ENCODE measurements at regions of chr9 and their contacts with region 1.

Region 1: DNA sequence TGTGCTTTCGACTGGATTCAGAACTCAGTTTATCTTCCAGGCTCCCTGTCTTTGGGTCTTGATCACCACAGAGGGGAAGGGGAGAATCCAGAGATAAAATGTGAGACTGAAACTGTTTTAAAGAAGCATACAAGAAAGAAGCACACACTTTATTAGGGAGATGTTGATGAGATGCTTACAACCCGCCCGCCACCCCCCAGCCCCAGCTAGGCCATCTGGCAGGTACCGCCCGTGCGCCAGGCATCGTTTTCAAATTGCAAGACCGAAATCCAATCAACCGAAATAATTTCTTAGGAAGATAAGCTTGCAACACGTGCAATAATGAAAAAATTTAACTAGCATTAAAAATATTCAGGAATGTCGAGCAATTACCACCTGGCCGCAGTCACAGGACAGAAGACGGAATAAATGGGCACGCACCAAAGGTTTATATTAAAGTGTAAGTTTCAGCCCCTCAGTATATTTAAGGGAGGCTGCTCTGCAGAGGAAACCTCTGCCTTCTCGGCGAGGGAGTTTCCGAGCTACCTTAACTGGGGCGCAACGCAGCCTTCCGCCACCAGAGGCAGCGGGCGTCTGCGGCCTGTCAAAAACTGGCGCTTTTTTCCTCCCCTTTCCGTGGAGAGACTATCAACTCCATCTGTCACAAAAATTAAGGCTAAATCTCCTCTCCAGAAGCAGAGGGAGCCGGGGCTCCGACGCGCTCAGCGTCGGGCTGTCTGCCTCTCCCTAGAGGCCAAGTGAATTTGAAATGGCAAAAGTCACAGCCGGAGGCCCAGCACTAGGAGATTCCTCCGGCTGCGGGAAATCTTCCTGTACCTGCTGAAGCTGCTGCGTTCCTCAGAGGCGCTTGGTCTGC is 996 bp upstream of the GAS1 start:
- DNase-seq: peak; percentile 88 to 93
- ATAC-seq: peak; percentile 80
- H3K4me3 ChIP-seq: peak overlapping the region; percentile 55 to 99
- H3K27ac ChIP-seq: peak overlapping the region in 1 of 2 donors; percentile 61
- H3K4me1 ChIP-seq: no peaks in the 10 kb centered on the region
- H3K27me3 ChIP-seq: no peaks in the 10 kb centered on the region

Region 2: GRCh38 chr9:86637515-86637914 is 310.8 kb before region 1 on chr9:
- intact Hi-C with region 1: loop called in 1 of 2 experiments (anchors 10 kb)
- DNase-seq: peak; percentile 50 to 80
- ATAC-seq: no peak
- H3K4me3 ChIP-seq: no peak overlapping the region
- H3K27ac ChIP-seq: no peak overlapping the region
- H3K4me1 ChIP-seq: no peaks in the 10 kb centered on the region
- H3K27me3 ChIP-seq: no peaks in the 10 kb centered on the region

Region 3: GRCh38 chr9:87035879-87036278 is 87.6 kb after region 1 on chr9:
- intact Hi-C with region 1: loop called in 1 of 2 experiments (anchors 2 kb)
- DNase-seq: no peak
- ATAC-seq: peak; percentile 71
- H3K4me3 ChIP-seq: no peak overlapping the region
- H3K27ac ChIP-seq: peak overlapping the region; percentile 93 to 94
- H3K4me1 ChIP-seq: peaks cover 3 to 4% of the 10 kb centered on the region in 2 donors
- H3K27me3 ChIP-seq: no peaks in the 10 kb centered on the region

Region 4: DNA sequence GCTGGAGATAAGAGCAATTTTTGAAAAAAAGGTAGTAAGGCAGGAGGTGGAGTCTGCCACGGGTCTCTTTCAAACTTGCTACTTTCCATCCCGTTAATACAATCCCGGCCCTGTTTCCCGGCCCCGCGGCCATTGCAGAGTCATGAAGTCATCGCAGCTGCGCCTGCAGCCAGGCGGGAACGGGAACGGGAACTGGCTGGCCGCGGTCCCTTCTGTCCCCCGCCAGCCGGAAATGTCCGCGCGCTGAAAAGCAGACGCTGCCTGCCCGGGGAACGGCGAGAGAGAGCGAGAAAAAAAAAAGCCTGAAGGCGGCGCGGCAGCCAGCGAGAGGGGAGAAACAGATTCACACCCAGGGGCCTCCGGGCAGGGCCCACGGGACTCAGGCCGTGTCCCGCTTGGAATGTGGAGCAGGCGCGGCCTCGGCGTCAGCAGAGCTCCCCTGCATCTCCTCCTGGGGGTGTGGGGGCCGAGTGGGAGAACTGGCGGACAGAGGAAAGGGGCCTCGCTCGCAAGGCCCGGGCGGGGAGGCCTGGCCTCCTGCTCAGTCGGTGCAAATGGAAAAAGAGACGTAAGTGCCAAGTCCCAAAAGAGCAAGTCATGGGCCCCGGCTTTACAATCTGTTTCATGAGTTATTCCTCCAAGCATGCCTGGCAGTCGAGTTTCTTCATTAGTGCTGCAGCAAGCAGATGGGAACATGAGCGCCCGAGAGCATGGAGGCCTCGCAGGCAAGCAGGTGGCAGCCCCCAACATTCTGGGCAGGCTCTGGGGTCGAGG is 200.2 kb after region 1 on chr9:
- intact Hi-C with region 1: loop called (anchors 1 to 10 kb)
- DNase-seq: peak; percentile 94 to 95
- ATAC-seq: peak; percentile 95
- H3K4me3 ChIP-seq: no peak overlapping the region
- H3K27ac ChIP-seq: peak overlapping the region; percentile 98 to 99
- H3K4me1 ChIP-seq: peaks cover 0 to 3% of the 10 kb centered on the region in 2 donors
- H3K27me3 ChIP-seq: no peaks in the 10 kb centered on the region

Region 5: GRCh38 chr9:87324613-87325194 is 376.4 kb after region 1 on chr9:
- intact Hi-C with region 1: loop called (anchors 1 to 2 kb)
- DNase-seq: no peak
- ATAC-seq: peak; percentile 83
- H3K4me3 ChIP-seq: no peak overlapping the region
- H3K27ac ChIP-seq: no peak overlapping the region
- H3K4me1 ChIP-seq: no peaks in the 10 kb centered on the region
- H3K27me3 ChIP-seq: no peaks in the 10 kb centered on the region

Measured in aorta (tissue), 5 donors.